ENCODE measurements at regions of chr11 and their contacts with region 1.

Region 1: GRCh38 chr11:128342511-128343134 is 244.7 kb downstream of the ETS1 start:
- DNase-seq: peak; percentile 91
- ATAC-seq: peak; percentile 68
- H3K4me3 Mint-ChIP-seq: peak overlapping the region; percentile 65
- H3K27ac Mint-ChIP-seq: peak overlapping the region; percentile 95
- H3K4me1 Mint-ChIP-seq: peaks cover 97% of the 10 kb centered on the region
- H3K27me3 Mint-ChIP-seq: no peaks in the 10 kb centered on the region

Region 2: GRCh38 chr11:126751242-126751641 is 1591.4 kb before region 1 on chr11:
- CTCF ChIA-PET with region 1: no interaction called
- POLR2A ChIA-PET with region 1: no interaction called
- intact Hi-C with region 1: no loop called
- DNase-seq: no peak
- ATAC-seq: no peak
- H3K4me3 Mint-ChIP-seq: no peak overlapping the region
- H3K27ac Mint-ChIP-seq: no peak overlapping the region
- H3K4me1 Mint-ChIP-seq: no peaks in the 10 kb centered on the region
- H3K27me3 Mint-ChIP-seq: peaks cover 15% of the 10 kb centered on the region

Region 3: GRCh38 chr11:128195057-128195751 is 147.4 kb before region 1 on chr11:
- CTCF ChIA-PET with region 1: no interaction called
- POLR2A ChIA-PET with region 1: interaction called, 3 read pairs
- intact Hi-C with region 1: loop called in 1 of 2 experiments (anchors 1 kb)
- DNase-seq: peak; percentile 63
- ATAC-seq: peak; percentile 73
- H3K4me3 Mint-ChIP-seq: peak overlapping the region; percentile 10
- H3K27ac Mint-ChIP-seq: no peak overlapping the region
- H3K4me1 Mint-ChIP-seq: peaks cover 39% of the 10 kb centered on the region
- H3K27me3 Mint-ChIP-seq: no peaks in the 10 kb centered on the region

Region 4: DNA sequence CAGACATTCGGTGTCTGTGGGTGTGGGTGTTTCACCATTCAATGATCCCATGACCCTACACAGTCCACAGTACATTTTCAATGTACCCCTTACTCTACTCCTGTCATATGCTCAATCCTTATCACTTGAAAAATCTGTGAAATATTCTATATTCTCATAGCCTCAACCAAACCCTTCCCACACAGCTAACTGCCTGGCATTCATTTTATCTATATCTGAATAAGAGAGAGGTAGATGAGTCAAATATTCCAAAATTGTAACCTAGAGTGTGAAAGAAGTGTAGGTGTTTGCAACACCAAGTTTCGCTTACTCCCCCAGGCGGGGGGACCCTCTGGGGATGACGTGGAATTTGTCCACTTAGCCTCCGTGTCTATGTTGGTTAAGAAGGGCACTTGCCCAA is 110.0 kb before region 1 on chr11:
- CTCF ChIA-PET with region 1: interaction called, 3 read pairs
- POLR2A ChIA-PET with region 1: interaction called, 4 read pairs
- intact Hi-C with region 1: loop called (anchors 1 kb)
- DNase-seq: peak; percentile 81
- ATAC-seq: peak; percentile 63
- H3K4me3 Mint-ChIP-seq: no peak overlapping the region
- H3K27ac Mint-ChIP-seq: peak overlapping the region; percentile 92
- H3K4me1 Mint-ChIP-seq: peaks cover 60% of the 10 kb centered on the region
- H3K27me3 Mint-ChIP-seq: no peaks in the 10 kb centered on the region

Region 5: DNA sequence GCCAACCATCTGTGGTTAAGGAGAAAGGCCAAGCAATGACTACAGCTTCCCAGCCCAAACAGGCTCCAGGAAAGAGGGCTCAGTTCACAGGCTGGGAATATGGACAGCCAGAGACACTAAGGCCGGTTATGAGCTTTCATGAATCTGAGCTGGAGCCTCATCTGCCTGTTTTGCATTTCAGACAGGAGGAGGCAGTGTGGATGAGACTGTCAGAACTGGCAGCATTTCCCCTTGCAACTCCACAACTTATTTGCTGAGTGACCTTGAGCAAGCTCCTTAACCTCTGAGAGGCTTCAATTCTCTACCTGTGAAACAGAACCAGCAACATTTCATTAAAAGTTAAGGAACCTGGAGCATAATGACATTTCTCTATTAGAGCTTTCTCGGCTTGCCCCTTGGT is 19.2 kb before region 1 on chr11:
- CTCF ChIA-PET with region 1: interaction called, 28 read pairs
- POLR2A ChIA-PET with region 1: interaction called, 39 read pairs
- intact Hi-C with region 1: loop called (anchors 1 kb)
- DNase-seq: peak; percentile 67
- ATAC-seq: peak; percentile 8
- H3K4me3 Mint-ChIP-seq: peak overlapping the region; percentile 62
- H3K27ac Mint-ChIP-seq: peak overlapping the region; percentile 98
- H3K4me1 Mint-ChIP-seq: peaks cover 91% of the 10 kb centered on the region
- H3K27me3 Mint-ChIP-seq: no peaks in the 10 kb centered on the region

Region 6: DNA sequence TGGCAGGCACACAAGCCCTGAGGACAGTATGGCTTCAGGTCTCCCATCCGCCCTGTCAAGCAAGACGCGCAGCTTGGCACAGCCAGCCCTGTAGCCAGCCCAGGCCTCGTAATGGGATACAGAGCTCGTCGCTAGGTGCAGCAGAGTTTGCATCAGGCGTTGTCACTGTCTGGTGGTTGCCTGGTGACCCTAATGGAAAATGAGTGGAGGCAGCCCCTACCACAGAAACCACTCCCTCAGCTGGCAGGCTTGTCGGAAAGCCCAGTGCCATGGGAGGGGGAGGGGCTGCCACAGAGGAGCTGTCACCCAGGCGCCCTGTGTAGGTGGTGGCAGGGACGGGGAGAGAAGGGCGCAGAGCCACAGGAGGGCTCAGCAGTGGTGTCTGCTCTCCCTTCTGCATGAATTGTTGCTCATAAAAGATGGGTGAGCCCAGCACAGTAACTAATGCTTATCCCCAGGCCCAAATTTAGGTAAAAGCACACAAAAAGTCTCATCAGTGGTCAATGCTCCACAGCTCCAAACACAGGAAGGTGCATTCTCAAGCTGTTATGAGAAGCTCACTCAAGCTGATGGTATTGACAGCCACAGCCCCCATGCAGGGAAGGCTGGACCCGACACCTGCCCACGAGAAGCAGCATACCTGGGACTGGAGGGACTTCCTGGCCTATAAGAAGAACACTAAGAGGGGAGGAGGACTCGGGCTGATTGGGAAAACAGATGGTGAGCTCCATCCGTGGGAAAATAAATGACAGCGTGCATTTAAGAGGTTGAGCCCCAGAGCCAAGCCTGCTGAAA is 80.2 kb after region 1 on chr11:
- CTCF ChIA-PET with region 1: interaction called, 4 read pairs
- POLR2A ChIA-PET with region 1: interaction called, 8 read pairs
- intact Hi-C with region 1: loop called (anchors 1 to 2 kb)
- DNase-seq: peak; percentile 97
- ATAC-seq: peak; percentile 94
- H3K4me3 Mint-ChIP-seq: peak overlapping the region; percentile 36
- H3K27ac Mint-ChIP-seq: peak overlapping the region; percentile 82
- H3K4me1 Mint-ChIP-seq: peaks cover 53% of the 10 kb centered on the region
- H3K27me3 Mint-ChIP-seq: no peaks in the 10 kb centered on the region

Region 7: GRCh38 chr11:128506999-128507611 is 164.5 kb after region 1 on chr11:
- CTCF ChIA-PET with region 1: interaction called, 4 read pairs
- POLR2A ChIA-PET with region 1: interaction called, 3 read pairs
- intact Hi-C with region 1: loop called in 1 of 2 experiments (anchors 5 kb)
- DNase-seq: peak; percentile 80
- ATAC-seq: peak; percentile 58
- H3K4me3 Mint-ChIP-seq: peak overlapping the region; percentile 96
- H3K27ac Mint-ChIP-seq: peak overlapping the region; percentile 98
- H3K4me1 Mint-ChIP-seq: peaks cover 89% of the 10 kb centered on the region
- H3K27me3 Mint-ChIP-seq: no peaks in the 10 kb centered on the region

Region 8: GRCh38 chr11:128582496-128583366 is 240.1 kb after region 1 on chr11:
- CTCF ChIA-PET with region 1: no interaction called
- POLR2A ChIA-PET with region 1: no interaction called
- intact Hi-C with region 1: loop called in 1 of 2 experiments (anchors 5 kb)
- DNase-seq: peak; percentile 37
- ATAC-seq: no peak
- H3K4me3 Mint-ChIP-seq: peak overlapping the region; percentile 48
- H3K27ac Mint-ChIP-seq: peak overlapping the region; percentile 75
- H3K4me1 Mint-ChIP-seq: peaks cover 61% of the 10 kb centered on the region
- H3K27me3 Mint-ChIP-seq: peaks cover 2% of the 10 kb centered on the region

Region 9: GRCh38 chr11:128593281-128593680 is 250.7 kb after region 1 on chr11:
- CTCF ChIA-PET with region 1: no interaction called
- POLR2A ChIA-PET with region 1: no interaction called
- intact Hi-C with region 1: no loop called
- DNase-seq: no peak
- ATAC-seq: no peak
- H3K4me3 Mint-ChIP-seq: no peak overlapping the region
- H3K27ac Mint-ChIP-seq: no peak overlapping the region
- H3K4me1 Mint-ChIP-seq: peaks cover 19% of the 10 kb centered on the region
- H3K27me3 Mint-ChIP-seq: peaks cover 2% of the 10 kb centered on the region

Measured in activated CD4-positive, alpha-beta T cell treated with anti-CD3 and anti-CD28 coated beads for 36 hours (primary cell).